ENCODE measurements at regions of chr10 and their contacts with region 1.

Region 1: DNA sequence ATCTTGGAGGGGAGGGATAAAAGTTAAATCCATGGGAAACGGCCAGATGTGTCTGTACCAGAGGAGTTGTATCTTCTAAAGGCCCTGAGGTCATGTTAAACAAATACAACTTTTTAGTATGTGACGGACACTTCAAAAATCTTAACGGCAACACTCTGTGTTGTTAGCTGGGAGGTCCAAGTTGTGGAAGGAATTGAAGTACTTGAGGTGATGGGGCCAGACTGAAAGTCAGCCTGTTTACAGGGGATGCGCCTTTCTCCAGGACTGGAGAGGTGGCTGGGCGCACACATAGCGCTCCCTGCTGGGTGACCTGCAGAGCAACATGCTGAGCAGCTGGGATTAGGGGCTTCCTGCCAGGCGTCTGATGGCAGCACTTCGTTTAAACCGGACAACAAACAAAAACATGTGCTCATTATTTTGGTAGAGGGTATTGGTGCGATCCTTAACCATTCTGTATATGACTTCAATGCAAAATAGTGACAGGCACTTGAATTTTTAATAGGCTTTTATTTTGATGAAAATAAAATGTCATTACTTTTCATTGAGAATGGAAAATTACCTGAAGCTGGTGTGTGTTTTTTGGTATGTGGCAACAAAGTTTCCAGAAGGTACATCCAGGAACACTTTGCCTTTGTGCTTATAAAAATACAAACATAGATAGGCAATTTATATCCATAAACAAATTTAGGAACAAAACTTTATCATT is 198.2 kb downstream of the MLLT10 start:
- DNase-seq: peak in 1 of 2 donors; percentile 92
- H3K4me3 ChIP-seq: no peak overlapping the region
- H3K27ac ChIP-seq: no peak overlapping the region
- H3K4me1 ChIP-seq: peaks cover 0 to 25% (median 8%) of the 10 kb centered on the region in 4 donors
- H3K27me3 ChIP-seq: no peaks in the 10 kb centered on the region
- CTCF ChIP-seq: peak in 5 of 7 experiments; percentile 26 to 73 (median 58)
- EP300 ChIP-seq: no peak
- POLR2A ChIP-seq: no peak

Region 2: DNA sequence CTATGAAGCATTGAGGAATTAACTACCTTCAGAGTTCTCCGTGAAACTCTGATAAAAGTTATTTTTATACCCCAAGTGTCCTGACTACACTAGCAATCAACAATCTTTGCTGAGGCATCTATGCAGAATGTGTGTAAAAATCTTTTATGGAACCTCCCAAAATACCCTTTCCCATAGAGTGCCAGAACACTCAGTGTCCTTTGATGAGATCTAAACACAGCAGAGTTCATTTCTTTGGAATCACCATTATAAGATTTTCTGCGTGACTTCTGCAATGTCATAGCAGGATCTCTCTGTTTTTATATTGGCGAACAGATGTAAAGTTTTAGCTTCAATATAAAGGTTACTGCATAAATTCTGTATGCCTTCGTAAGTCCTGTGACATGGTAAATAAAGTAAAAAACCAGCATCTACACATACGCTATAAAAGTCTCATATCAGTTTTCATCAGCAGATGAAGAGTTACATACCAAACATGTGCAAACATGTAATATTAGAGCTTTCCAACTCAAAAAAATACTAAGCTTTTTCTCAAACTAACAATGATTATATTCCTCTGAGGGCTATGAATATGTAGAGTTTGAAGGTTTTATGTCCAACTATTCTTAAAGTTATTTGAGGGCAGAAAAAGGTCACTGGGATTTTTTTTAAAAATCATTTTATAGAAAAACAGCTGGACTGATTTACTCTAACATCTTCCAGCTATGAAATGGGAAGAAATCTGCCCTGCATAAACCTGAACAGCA is 273.9 kb before region 1 on chr10:
- intact Hi-C with region 1: no loop called
- DNase-seq: peak in 1 of 2 donors; percentile 50
- H3K4me3 ChIP-seq: no peak overlapping the region
- H3K27ac ChIP-seq: no peak overlapping the region
- H3K4me1 ChIP-seq: no peaks in the 10 kb centered on the region
- H3K27me3 ChIP-seq: no peaks in the 10 kb centered on the region
- CTCF ChIP-seq: no peak
- EP300 ChIP-seq: no peak
- POLR2A ChIP-seq: no peak

Region 3: DNA sequence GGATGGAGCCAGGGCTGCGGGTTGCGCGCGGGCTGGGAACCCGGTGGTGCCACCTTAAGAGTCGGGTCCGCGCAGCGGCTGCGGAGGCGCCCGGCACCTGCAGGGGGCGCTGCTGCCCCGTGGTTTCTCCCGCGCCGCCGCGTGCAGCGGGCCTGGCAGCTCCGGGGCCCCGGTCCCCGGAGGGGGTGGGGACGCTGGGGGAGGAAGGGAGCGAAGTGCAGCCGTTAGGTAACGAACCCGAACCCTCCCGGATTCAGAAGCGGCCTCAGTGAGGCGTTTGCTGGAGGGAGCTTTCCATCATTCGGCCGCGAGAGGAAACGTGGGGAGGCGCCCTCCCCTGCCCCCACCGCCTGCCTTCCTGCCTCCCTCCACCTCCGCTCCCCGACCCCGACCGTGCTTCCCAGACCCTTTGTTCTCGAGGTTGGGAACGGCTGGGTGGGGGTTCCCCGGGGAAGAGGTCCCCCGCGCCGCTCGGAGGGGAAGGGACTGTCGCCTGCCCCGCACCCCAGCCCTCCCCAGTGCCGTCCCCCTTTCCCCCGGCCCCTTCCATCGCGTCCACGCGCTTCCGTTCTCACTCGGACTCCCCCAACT is 236.4 kb before region 1 on chr10:
- intact Hi-C with region 1: loop called (anchors 10 kb)
- DNase-seq: peak; percentile 87 to 96
- H3K4me3 ChIP-seq: peak overlapping the region; percentile 66 to 84 (median 76)
- H3K27ac ChIP-seq: peak overlapping the region; percentile 36 to 69 (median 68)
- H3K4me1 ChIP-seq: peaks cover 26 to 48% (median 42%) of the 10 kb centered on the region in 4 donors
- H3K27me3 ChIP-seq: peaks cover 0 to 68% (median 49%) of the 10 kb centered on the region in 3 donors
- CTCF ChIP-seq: peak in 5 of 7 experiments; percentile 64 to 100 (median 97)
- EP300 ChIP-seq: no peak
- POLR2A ChIP-seq: no peak

Measured in stomach (tissue), 19 donors.